WTC11 (cell line): ENCODE measurements at regions of chr11 and their contacts with region 1.

Region 1: GRCh38 chr11:74449369-74449931 is 17.9 kb downstream of the KCNE3 start:
- DNase-seq: no peak
- ATAC-seq: peak; percentile 82
- H3K4me3 Mint-ChIP-seq: no peak overlapping the region
- H3K27ac Mint-ChIP-seq: no peak overlapping the region
- H3K4me1 Mint-ChIP-seq: peaks cover 6% of the 10 kb centered on the region
- H3K27me3 Mint-ChIP-seq: no peaks in the 10 kb centered on the region; the same call in 1 of the 2 replicates
- CTCF ChIP-seq: peak; percentile 40; the same call in 1 of the 2 replicates

Region 2: DNA sequence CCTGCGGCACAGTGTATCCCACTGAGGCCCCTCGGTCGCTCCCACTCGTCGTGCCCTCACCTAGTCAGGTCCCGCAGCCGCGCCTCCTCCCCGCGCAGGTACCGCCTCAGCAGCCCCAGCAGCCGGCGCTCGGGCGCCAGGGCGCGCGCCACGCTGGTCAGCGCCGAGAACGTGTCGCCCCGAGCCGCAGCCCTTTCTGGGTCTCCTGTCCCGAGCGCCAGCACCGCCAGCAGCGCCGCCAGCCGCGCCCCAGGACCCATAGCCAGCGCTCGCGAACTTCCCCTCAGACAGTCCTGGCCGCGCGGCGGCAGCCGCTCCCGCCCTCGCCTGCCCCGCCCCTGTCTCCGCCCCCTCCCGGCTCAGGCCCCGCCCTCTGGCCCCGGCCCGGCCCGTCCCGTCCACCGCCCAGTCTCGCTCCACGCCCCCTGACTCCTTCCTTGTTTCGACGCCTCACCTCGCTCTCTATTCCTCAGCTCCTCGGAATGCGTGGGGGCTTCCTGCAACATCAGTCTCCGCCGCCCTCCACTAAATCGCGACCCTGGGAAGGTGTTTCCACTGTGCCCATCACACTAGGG is 138.0 kb before region 1 on chr11 and contains the start of gene P4HA3:
- CTCF ChIA-PET with region 1: interaction called, 11 read pairs
- POLR2A ChIA-PET with region 1: no interaction called
- DNase-seq: peak; percentile 85
- ATAC-seq: peak; percentile 97
- H3K4me3 Mint-ChIP-seq: peak within 1 kb of the TSS; percentile 74
- H3K27ac Mint-ChIP-seq: no peak within 1 kb of the TSS
- H3K4me1 Mint-ChIP-seq: peaks cover 9% of the 10 kb centered on the region
- H3K27me3 Mint-ChIP-seq: peaks cover 61% of the 10 kb centered on the region
- CTCF ChIP-seq: no peak
- total RNA-seq, gene P4HA3: 0.13 to 0.14 TPM in 2 of 3 replicates, not detected in the other

Region 3: GRCh38 chr11:74388678-74389327 is 60.6 kb before region 1 on chr11:
- CTCF ChIA-PET with region 1: interaction called, 45 read pairs
- POLR2A ChIA-PET with region 1: no interaction called
- DNase-seq: no peak
- ATAC-seq: peak; percentile 80
- H3K4me3 Mint-ChIP-seq: no peak overlapping the region
- H3K27ac Mint-ChIP-seq: peak overlapping the region; percentile 25
- H3K4me1 Mint-ChIP-seq: peaks cover 40% of the 10 kb centered on the region
- H3K27me3 Mint-ChIP-seq: no peaks in the 10 kb centered on the region
- CTCF ChIP-seq: no peak

Region 4: DNA sequence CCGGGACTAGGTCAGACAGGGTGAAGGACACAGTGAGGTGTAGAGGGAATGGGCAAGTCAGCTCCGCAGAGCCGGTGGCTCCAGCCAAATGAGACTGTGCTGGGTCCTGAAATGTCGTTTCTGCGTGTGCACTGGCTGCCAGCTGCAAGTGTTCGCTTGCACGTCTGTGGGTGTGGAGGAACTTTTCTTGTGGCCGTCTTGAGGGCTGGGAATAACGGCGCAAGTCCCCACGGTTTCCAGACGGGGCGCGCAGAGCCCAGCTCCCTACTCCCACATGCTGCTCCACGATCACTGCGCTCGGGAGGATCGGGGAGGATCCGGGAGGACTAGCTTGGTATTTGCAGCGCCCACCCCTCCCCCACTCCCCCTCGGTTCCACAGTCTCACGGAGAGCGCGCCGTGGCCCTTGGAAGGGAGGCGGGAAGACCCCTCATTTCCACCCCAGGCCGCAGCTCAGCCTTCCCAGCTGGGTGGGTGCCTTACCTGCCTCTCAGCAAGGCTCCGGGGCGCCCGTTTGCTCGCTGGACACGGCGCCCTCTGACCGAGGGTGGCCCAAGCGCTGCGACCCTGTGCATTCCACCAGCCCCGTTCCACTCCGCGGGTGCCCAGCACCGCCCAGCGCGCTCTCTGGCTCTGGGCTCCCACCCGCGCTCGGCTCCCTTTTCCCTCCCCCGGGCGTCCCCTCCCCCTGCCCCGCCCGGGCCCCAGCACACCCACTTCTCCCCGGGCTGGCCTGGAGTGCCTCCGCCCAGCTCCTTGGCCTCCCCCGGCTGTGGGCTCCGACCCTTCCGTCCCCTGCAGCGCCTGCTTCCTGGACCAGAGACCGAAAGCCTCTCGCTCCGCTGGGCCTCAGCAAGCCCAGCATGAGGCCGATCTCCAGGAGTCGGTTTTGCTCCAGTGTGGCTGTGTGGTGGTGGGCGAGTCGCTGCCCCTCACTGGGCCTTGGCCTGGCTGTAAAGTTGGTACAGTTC is 17.8 kb after region 1 on chr11 and contains the start of gene KCNE3:
- CTCF ChIA-PET with region 1: interaction called, 10 read pairs
- POLR2A ChIA-PET with region 1: no interaction called
- DNase-seq: peak; percentile 52
- ATAC-seq: peak; percentile 79
- H3K4me3 Mint-ChIP-seq: peak within 1 kb of the TSS; percentile 67
- H3K27ac Mint-ChIP-seq: no peak within 1 kb of the TSS
- H3K4me1 Mint-ChIP-seq: peaks cover 21% of the 10 kb centered on the region
- H3K27me3 Mint-ChIP-seq: peaks cover 24% of the 10 kb centered on the region
- CTCF ChIP-seq: no peak
- total RNA-seq, gene KCNE3: 1.9 to 3.7 TPM (median 3.5 TPM) in 3 replicates

Region 5: GRCh38 chr11:74492974-74493790 is 43.7 kb after region 1 on chr11 and contains the start of gene LIPT2:
- CTCF ChIA-PET with region 1: interaction called, 23 read pairs
- POLR2A ChIA-PET with region 1: interaction called, 9 read pairs
- DNase-seq: peak; percentile 97
- ATAC-seq: peak; percentile 94
- H3K4me3 Mint-ChIP-seq: peak within 1 kb of the TSS; percentile 72
- H3K27ac Mint-ChIP-seq: peak within 1 kb of the TSS; percentile 97
- H3K4me1 Mint-ChIP-seq: peaks cover 20% of the 10 kb centered on the region
- H3K27me3 Mint-ChIP-seq: no peaks in the 10 kb centered on the region; the same call in 1 of the 2 replicates
- CTCF ChIP-seq: no peak
- total RNA-seq, gene LIPT2: 9.3 to 9.6 TPM (median 9.5 TPM) in 3 replicates

Region 6: GRCh38 chr11:74634537-74634936 is 185.1 kb after region 1 on chr11:
- CTCF ChIA-PET with region 1: no interaction called
- POLR2A ChIA-PET with region 1: no interaction called
- DNase-seq: no peak
- ATAC-seq: peak; percentile 57
- H3K4me3 Mint-ChIP-seq: no peak overlapping the region
- H3K27ac Mint-ChIP-seq: no peak overlapping the region
- H3K4me1 Mint-ChIP-seq: no peaks in the 10 kb centered on the region
- H3K27me3 Mint-ChIP-seq: no peaks in the 10 kb centered on the region
- CTCF ChIP-seq: no peak